A673 (cell line): ENCODE measurements at regions of chr12 and their contacts with region 1.

Region 1: GRCh38 chr12:56157201-56158028 is 744 bp upstream of the MYL6 start:
- DNase-seq: peak; percentile 87
- H3K4me3 ChIP-seq: peak overlapping the region; percentile 78
- H3K27ac ChIP-seq: peak overlapping the region; percentile 95
- H3K4me1 ChIP-seq: peaks cover 30% of the 10 kb centered on the region
- H3K27me3 ChIP-seq: no peaks in the 10 kb centered on the region
- CTCF ChIP-seq: peak; percentile 45

Region 2: GRCh38 chr12:56127888-56128669 is 29.3 kb before region 1 on chr12 and contains the start of gene ESYT1:
- CTCF ChIA-PET with region 1: no interaction called
- POLR2A ChIA-PET with region 1: interaction called, 6 read pairs
- intact Hi-C with region 1: loop called (anchors 2 kb)
- DNase-seq: peak; percentile 100
- H3K4me3 ChIP-seq: peak within 1 kb of the TSS; percentile 72
- H3K27ac ChIP-seq: peak within 1 kb of the TSS; percentile 76
- H3K4me1 ChIP-seq: peaks cover 21% of the 10 kb centered on the region
- H3K27me3 ChIP-seq: no peaks in the 10 kb centered on the region
- CTCF ChIP-seq: no peak
- total RNA-seq, gene ESYT1: 90.0 and 107 TPM in 2 replicates

Region 3: DNA sequence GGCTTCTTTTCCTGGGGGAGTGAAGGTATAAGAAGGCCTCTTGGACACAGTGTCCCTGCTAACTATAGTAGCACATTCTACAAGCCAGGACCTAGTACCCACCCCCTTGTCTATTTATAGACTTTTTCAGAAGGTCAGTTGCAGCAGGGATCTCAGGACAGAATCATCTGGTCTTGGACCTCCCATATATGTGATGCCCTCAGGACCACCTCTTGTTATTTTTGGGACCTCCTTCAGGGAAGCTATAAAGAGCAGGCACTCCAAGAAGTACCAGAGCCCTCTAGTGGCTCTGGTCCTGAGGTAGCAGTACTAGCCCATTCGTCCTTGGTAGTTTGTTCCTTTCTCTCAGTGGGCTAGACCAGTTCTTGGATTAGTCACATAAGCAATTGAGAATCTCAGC is 113.6 kb after region 1 on chr12:
- CTCF ChIA-PET with region 1: interaction called, 5 read pairs
- POLR2A ChIA-PET with region 1: no interaction called
- intact Hi-C with region 1: loop called (anchors 1 kb)
- DNase-seq: peak; percentile 45
- H3K4me3 ChIP-seq: no peak overlapping the region
- H3K27ac ChIP-seq: no peak overlapping the region
- H3K4me1 ChIP-seq: peaks cover 3% of the 10 kb centered on the region
- H3K27me3 ChIP-seq: no peaks in the 10 kb centered on the region
- CTCF ChIP-seq: peak; percentile 57